ENCODE measurements at regions of chr4 and their contacts with region 1.

Region 1: DNA sequence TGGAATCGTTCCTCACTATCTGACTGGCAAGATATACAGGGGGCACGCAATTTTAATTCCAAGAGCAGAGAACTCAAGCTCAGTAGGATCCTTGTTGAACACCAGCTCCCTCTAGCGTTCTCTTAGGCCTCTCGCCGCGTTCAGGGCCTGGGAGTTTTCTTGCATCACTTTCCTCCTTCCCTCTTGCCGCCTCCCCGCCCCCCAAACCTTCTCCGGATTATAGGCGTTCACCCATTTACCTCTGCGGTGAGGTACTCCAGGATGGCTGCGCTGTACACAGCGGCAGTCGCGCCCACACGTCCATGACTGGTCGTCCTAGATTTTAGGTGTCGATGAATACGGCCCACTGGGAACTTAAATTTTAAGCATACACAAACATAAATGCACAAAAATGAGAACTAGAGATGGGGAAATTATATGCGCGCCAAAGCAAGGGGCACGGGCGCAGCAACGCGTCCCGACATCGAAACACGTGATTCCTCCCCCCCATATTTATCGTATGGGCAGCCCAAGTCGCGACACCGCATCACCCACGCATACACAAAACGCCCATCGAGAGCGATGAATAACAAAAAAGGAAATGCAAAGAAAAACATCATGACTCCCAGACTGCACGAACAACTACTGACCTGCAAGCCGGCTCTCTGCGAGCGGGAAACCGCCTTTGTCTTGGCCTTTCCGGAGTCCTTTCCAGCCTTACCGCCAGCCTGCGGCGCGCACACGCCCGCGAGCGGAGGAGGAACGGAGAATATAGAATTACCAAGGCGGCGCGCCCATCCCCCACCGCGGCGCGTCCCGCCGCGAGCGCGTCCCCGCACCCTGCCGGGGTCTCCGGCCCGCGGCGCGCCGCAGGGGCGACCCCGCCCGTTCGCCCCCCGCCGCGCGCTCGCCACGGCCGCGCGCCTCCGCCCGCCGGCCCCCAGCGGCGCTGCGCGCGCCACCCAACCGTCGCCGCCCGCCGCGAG is 759 bp downstream of the H2AZ1 start:
- DNase-seq: peak; percentile 92 to 95
- H3K4me3 ChIP-seq: peak overlapping the region; percentile 74 to 90
- H3K27ac ChIP-seq: peak overlapping the region; percentile 96 to 97
- H3K4me1 ChIP-seq: peaks cover 0 to 45% (median 19%) of the 10 kb centered on the region in 4 donors
- H3K27me3 ChIP-seq: no peaks in the 10 kb centered on the region
- CTCF ChIP-seq: peak; percentile 75 to 78

Region 2: DNA sequence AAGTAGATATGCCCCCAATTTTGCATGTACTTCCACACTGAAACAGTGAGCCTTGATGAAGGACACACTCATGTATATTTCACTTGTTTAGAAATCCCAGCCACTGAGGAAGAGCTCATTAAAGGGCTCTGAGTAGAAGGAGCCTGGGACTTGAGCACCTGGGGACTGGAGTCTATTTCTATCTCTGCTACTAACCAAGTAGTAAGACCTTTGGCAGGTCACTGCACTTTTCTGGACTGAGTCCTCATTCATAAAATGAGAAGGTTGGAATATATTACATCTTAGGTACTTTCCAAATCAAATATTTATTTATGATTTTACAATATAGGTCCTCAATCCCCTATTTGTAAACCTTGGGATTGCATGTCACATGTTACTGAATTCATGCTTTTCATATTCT is 213.5 kb before region 1 on chr4:
- intact Hi-C with region 1: no loop called
- DNase-seq: no peak
- H3K4me3 ChIP-seq: no peak overlapping the region
- H3K27ac ChIP-seq: no peak overlapping the region
- H3K4me1 ChIP-seq: no peaks in the 10 kb centered on the region
- H3K27me3 ChIP-seq: no peaks in the 10 kb centered on the region
- CTCF ChIP-seq: no peak

Region 3: DNA sequence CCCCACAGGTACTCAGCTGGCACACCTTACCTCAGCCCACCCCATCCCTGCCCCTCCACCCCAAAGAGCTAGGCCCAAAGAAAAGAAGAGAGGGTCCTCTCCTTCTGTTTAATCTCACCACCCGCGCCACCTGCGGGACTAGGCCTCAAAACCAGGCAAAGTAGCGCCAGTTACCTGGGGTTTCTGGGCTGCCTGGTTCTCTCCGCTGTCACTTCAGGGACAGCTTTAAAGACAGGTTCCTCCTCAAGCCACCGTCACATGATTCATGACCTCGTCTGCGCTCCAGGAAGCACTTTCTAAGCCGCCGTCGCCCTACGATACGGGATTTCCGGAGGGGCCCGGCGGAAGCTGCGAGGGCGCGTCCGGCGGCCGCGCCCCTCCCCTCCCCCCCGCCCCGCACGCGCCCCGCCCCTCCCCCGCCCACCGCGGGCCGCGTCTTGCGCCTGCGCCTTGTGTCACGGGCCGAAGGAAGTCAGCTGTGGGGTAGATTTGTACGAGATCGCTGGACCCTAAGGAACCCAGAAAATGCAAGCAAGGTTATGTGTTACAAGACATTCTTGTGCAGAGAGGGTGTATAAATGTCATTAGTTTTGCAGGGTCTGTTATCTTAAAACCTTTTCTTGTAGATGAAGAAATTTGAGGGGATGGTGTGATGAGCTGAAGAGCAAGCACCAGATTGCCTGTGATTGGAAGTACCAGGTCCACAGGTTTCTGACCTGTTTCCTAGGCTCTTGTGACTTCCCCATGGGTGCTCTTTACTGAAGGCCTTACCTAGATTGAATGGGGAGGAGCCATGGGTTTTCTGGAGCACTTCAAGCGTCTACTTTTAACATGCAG is 54.9 kb before region 1 on chr4 and contains the start of gene LAMTOR3:
- intact Hi-C with region 1: loop called (anchors 5 kb)
- DNase-seq: peak; percentile 92 to 95
- H3K4me3 ChIP-seq: peak within 1 kb of the TSS; percentile 69 to 82
- H3K27ac ChIP-seq: peak within 1 kb of the TSS; percentile 87 to 88
- H3K4me1 ChIP-seq: peaks cover 0 to 39% (median 17%) of the 10 kb centered on the region in 4 donors
- H3K27me3 ChIP-seq: no peaks in the 10 kb centered on the region
- CTCF ChIP-seq: no peak